Common myeloid progenitor, CD34-positive (primary cell): ENCODE measurements at regions of chr2 and their contacts with region 1.

Region 1: GRCh38 chr2:101387151-101387807 is at the start of gene CREG2:
- DNase-seq: peak; percentile 59 to 81 (median 76)
- H3K4me3 ChIP-seq: peak within 1 kb of the TSS; percentile 43 to 81 (median 66)
- H3K27ac ChIP-seq: no peak within 1 kb of the TSS
- H3K4me1 ChIP-seq: peaks cover 3 to 14% (median 12%) of the 10 kb centered on the region in 4 experiments
- H3K27me3 ChIP-seq: peaks cover 5 to 47% (median 24%) of the 10 kb centered on the region in 5 experiments

Region 2: GRCh38 chr2:101270700-101271259 is 116.5 kb before region 1 on chr2:
- CTCF ChIA-PET with region 1: no interaction called
- POLR2A ChIA-PET with region 1: no interaction called
- DNase-seq: no peak
- H3K4me3 ChIP-seq: no peak overlapping the region
- H3K27ac ChIP-seq: no peak overlapping the region
- H3K4me1 ChIP-seq: peaks cover 0 to 10% (median 3%) of the 10 kb centered on the region in 4 experiments
- H3K27me3 ChIP-seq: no peaks in the 10 kb centered on the region

Region 3: DNA sequence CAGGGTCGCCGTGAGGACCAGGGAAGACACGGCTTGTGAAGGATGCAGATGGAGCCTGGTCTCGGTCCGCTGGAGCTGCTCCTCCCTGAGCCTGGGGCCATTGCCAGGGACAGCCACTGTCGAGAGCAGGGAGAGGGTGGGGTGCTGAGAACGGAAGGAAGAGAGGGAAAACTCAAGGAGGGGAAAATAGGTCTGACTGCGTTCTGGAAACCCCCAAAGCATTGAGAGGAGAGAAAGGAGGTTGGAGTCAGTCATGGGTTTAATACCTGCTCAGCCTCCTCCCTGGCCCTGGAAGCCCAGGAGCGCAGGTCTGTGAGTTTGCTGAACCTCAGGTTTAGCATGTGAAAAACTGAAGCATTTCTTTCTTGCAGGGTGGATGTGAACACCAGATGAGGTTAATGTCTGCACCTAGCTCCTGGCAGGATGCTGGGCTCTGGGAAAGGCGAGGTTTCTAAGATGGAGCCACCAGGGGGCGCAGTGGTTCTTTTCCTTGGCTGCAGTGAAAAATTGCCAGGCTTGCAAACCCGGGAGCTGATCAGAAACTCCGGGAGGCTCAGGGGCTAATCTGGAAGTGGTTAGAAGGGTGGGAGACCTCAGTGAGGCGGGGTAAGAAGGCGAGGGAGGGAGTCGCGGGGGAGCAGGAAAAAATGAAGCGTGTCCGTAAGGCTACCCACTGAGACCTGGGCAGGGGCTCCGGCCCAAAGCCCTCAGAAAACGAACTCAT is 45.2 kb before region 1 on chr2:
- CTCF ChIA-PET with region 1: interaction called, 11 read pairs
- POLR2A ChIA-PET with region 1: no interaction called
- DNase-seq: peak; percentile 57 to 70 (median 58)
- H3K4me3 ChIP-seq: no peak overlapping the region
- H3K27ac ChIP-seq: no peak overlapping the region
- H3K4me1 ChIP-seq: peaks cover 0 to 20% (median 10%) of the 10 kb centered on the region in 4 experiments
- H3K27me3 ChIP-seq: no peaks in the 10 kb centered on the region

Region 4: GRCh38 chr2:101349893-101350662 is 37.2 kb before region 1 on chr2:
- CTCF ChIA-PET with region 1: interaction called, 29 read pairs
- POLR2A ChIA-PET with region 1: no interaction called
- DNase-seq: peak; percentile 36 to 69 (median 58)
- H3K4me3 ChIP-seq: no peak overlapping the region
- H3K27ac ChIP-seq: no peak overlapping the region
- H3K4me1 ChIP-seq: peaks cover 0 to 6% (median 0%) of the 10 kb centered on the region in 4 experiments
- H3K27me3 ChIP-seq: no peaks in the 10 kb centered on the region

Region 5: DNA sequence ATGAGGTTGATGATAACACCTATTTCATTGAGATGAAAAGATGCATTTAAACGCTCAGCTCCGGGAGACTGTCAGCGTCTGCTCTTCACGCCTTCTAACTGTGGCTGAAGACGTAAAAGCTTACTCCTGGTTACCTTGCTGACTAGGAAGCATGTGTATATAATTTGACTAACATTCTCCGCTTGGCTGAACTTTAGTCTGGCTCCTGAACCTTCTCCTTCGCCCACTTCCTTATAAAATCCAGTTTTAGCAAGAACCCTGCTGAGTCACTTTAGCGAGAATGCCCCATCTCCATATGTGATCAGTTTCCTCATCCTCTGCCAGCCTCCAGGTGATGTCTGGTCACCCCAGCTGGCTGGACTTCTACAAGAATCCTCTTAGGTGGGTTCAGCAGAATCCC is 12.8 kb after region 1 on chr2:
- CTCF ChIA-PET with region 1: interaction called, 13 read pairs
- POLR2A ChIA-PET with region 1: interaction called, 3 read pairs
- DNase-seq: peak in 2 of 3 donors; percentile 76 to 84
- H3K4me3 ChIP-seq: peak overlapping the region in 1 of 7 experiments; percentile 26
- H3K27ac ChIP-seq: peak overlapping the region; percentile 34 to 62
- H3K4me1 ChIP-seq: peaks cover 27 to 51% (median 43%) of the 10 kb centered on the region in 4 experiments
- H3K27me3 ChIP-seq: no peaks in the 10 kb centered on the region

Region 6: GRCh38 chr2:101405351-101405899 is 18.1 kb after region 1 on chr2:
- CTCF ChIA-PET with region 1: interaction called, 13 read pairs
- POLR2A ChIA-PET with region 1: interaction called, 4 read pairs
- DNase-seq: peak in 2 of 3 donors; percentile 69 to 78
- H3K4me3 ChIP-seq: no peak overlapping the region
- H3K27ac ChIP-seq: no peak overlapping the region
- H3K4me1 ChIP-seq: peaks cover 19 to 55% (median 42%) of the 10 kb centered on the region in 4 experiments
- H3K27me3 ChIP-seq: no peaks in the 10 kb centered on the region

Region 7: GRCh38 chr2:101419096-101419663 is 31.9 kb after region 1 on chr2:
- CTCF ChIA-PET with region 1: interaction called, 13 read pairs
- POLR2A ChIA-PET with region 1: no interaction called
- DNase-seq: peak; percentile 67 to 81 (median 73)
- H3K4me3 ChIP-seq: no peak overlapping the region
- H3K27ac ChIP-seq: no peak overlapping the region
- H3K4me1 ChIP-seq: no peaks in the 10 kb centered on the region
- H3K27me3 ChIP-seq: no peaks in the 10 kb centered on the region